Dorsolateral prefrontal cortex (tissue), 120 donors: ENCODE measurements at regions of chr1 and their contacts with region 1.

Region 1: DNA sequence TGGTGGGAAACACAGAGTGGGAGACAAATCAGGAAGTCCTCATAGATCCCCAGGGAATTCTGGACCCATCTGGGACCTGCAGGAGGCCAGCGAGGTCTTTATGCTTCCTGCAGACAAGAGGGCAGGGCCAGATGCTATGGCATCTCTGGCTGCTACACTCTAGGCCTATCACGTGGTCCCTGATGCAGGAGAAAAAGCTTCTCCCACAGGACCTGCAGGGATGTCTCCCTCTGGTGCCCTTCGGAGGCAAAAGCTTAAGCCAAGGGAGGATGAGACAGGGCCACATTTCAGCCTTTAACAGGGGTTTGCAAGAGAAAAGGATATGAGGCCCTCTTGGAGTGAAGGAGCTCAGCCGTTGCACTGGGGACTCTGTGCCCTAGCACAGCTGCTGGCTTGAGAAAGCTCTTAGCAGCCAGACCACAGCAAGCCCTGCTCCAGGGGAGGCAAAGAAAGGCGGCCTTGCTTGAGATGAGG is 243.0 kb downstream of the C1orf94 start:
- DNase-seq: no peak
- H3K4me3 ChIP-seq: no peak overlapping the region
- H3K27ac ChIP-seq: no peak overlapping the region
- H3K27me3 ChIP-seq: peaks cover 0 to 10% (median 0%) of the 10 kb centered on the region in 45 donors
- CTCF ChIP-seq: peak in 3 of 56 donors; percentile 10 to 24 (median 17)

Region 2: DNA sequence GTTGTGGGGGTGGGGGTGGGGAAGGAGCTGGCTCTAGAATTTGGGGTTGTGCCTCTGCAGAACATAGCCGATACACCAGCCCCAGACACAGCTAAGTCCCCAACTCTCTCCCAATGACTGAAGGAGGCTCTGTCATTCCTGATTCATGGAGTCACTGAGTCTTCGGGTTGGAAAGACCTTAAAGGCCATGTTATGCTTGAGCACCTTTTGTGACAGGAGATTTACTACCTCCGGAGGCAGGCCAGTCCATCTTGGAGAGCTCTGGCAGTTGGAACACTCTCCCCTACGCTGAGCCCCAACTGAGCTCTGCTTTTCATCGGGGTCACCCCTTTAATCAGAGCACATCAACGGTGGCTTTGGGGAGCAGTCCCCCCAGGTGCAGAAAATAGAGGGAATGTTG is 50.7 kb after region 1 on chr1:
- intact Hi-C with region 1: loop called in 1 of 2 experiments (anchors 5 kb)
- DNase-seq: no peak
- H3K4me3 ChIP-seq: no peak overlapping the region
- H3K27ac ChIP-seq: no peak overlapping the region
- H3K27me3 ChIP-seq: peaks cover 0 to 6% (median 0%) of the 10 kb centered on the region in 45 donors
- CTCF ChIP-seq: no peak